Calu3 (cell line): ENCODE measurements at regions of chr18 and their contacts with region 1.

Region 1: DNA sequence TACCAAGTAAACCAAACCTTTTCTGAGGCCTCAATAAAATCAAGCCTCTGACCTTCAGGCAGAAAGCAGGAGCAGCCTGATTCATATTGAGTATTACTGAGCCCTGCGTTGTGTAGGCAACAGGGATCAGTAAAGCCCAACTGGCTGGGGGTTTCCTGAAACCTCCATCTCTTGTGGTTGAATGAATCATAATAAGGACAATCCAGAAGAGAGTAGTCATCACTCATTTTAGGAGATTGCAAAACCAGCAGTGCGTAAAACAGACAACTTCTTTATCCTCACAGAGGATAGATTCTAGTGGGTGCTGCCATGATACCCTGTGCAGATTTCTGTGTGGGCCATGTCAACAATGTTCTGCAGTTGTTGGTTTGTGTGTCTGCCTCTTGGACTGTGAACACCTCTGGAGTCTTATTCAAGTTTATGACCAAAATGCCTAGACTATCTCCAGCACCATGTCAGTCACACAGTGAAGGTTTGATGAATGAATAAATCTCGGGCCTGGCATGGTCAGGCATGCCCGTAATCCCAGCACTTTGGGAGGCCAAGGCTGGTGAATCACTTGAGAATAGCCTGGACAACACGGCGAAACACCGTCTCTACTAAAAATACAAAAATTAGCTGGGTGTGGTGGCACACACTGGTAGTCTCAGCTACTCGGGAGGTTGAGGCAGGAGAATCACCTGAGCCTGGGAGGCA is 51.8 kb upstream of the RAB27B start:
- DNase-seq: peak; percentile 81
- H3K4me3 Mint-ChIP-seq: peak overlapping the region; percentile 1
- H3K27ac Mint-ChIP-seq: peak overlapping the region; percentile 84
- H3K4me1 Mint-ChIP-seq: peaks cover 67% of the 10 kb centered on the region
- H3K27me3 Mint-ChIP-seq: no peaks in the 10 kb centered on the region
- CTCF ChIP-seq: no peak

Region 2: DNA sequence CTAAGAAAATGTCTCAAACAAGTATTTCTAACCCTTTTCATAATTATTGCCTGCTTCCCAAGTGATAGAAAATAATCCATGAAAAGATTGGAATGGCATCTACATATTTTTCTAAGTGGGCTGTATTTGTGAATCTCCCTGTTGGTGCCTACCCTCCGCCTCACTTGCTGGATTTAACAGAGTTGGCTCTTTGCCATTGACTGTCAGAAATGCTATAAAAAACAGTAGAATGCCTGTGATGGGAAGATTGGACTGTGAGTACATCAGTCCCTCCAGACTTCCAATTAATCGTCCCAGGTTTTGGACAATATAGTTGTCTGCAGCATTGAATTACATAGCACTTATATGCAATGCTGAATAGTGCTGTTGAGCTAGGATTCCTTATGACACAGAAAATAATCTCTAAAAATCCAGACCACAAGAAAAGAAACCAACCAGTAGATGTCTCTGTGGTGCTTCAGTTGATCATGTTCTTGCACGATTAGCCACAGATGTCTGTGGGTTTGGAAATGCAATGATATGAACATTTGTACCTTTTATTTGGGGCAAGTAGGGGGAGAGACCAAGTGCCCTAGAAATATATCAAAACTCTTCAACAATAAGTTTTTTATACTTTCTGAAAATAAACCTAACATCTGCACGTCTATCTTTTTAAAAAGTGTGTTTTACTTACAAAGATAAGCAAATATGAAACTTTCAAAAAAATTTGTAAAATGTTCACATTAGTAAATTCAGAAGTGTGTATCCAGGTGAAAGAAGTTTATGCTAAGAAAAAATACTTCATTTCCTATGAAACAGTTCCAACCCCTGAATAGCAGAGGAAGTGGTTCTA is 96.9 kb before region 1 on chr18:
- CTCF ChIA-PET with region 1: interaction called, 11 read pairs
- intact Hi-C with region 1: loop called (anchors 1 kb)
- DNase-seq: peak; percentile 46
- H3K4me3 Mint-ChIP-seq: no peak overlapping the region
- H3K27ac Mint-ChIP-seq: peak overlapping the region; percentile 14
- H3K4me1 Mint-ChIP-seq: peaks cover 31% of the 10 kb centered on the region
- H3K27me3 Mint-ChIP-seq: no peaks in the 10 kb centered on the region
- CTCF ChIP-seq: peak; percentile 25

Region 3: GRCh38 chr18:54684784-54685183 is 91.6 kb before region 1 on chr18:
- CTCF ChIA-PET with region 1: interaction called, 11 read pairs
- intact Hi-C with region 1: loop called (anchors 1 kb)
- DNase-seq: peak; percentile 12
- H3K4me3 Mint-ChIP-seq: no peak overlapping the region
- H3K27ac Mint-ChIP-seq: no peak overlapping the region
- H3K4me1 Mint-ChIP-seq: peaks cover 28% of the 10 kb centered on the region
- H3K27me3 Mint-ChIP-seq: no peaks in the 10 kb centered on the region
- CTCF ChIP-seq: no peak

Region 4: DNA sequence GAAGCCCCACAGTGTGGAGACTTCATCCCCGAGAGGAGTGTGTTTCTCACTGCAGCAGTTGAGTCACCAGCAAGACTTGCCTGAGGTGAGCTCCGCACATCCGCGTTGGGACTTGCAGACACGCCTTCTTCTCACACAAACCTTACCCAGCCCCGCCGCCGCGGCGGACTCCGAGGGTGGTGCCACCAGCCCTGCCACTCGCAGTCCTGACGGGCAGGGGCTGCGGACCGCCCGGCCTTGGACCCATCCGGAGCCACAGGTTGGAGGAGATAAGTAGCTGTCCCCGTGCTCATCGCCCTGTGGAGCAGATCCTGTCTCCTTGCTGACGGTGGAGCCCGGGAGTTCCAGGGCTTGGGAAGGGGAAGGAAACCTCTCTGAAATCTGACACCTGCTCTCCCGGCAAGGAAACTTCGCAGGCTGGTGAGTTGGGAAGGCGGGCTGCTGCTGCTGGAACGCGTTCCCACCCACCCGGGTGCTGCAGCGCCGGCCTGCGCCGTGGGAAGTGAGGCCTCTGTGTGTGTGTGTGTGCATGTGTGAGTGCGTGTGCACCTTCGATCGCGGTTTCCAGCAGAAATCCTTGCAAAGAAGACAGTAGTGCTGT is 52.0 kb after region 1 on chr18 and contains the start of gene RAB27B:
- CTCF ChIA-PET with region 1: interaction called, 4 read pairs
- intact Hi-C with region 1: loop called (anchors 2 kb)
- DNase-seq: peak; percentile 92
- H3K4me3 Mint-ChIP-seq: peak within 1 kb of the TSS; percentile 95
- H3K27ac Mint-ChIP-seq: peak within 1 kb of the TSS; percentile 84
- H3K4me1 Mint-ChIP-seq: peaks cover 67% of the 10 kb centered on the region
- H3K27me3 Mint-ChIP-seq: no peaks in the 10 kb centered on the region
- CTCF ChIP-seq: no peak
- total RNA-seq, gene RAB27B: 38.3 and 60.6 TPM in 2 replicates

Region 5: GRCh38 chr18:54859667-54860421 is 83.4 kb after region 1 on chr18:
- CTCF ChIA-PET with region 1: interaction called, 4 read pairs
- intact Hi-C with region 1: loop called (anchors 2 kb)
- DNase-seq: no peak
- H3K4me3 Mint-ChIP-seq: peak overlapping the region; percentile 64
- H3K27ac Mint-ChIP-seq: peak overlapping the region; percentile 91
- H3K4me1 Mint-ChIP-seq: peaks cover 59% of the 10 kb centered on the region
- H3K27me3 Mint-ChIP-seq: no peaks in the 10 kb centered on the region
- CTCF ChIP-seq: no peak

Region 6: GRCh38 chr18:54983041-54983686 is 206.7 kb after region 1 on chr18:
- CTCF ChIA-PET with region 1: no interaction called
- intact Hi-C with region 1: loop called (anchors 1 kb)
- DNase-seq: peak; percentile 20
- H3K4me3 Mint-ChIP-seq: no peak overlapping the region
- H3K27ac Mint-ChIP-seq: no peak overlapping the region
- H3K4me1 Mint-ChIP-seq: peaks cover 6% of the 10 kb centered on the region
- H3K27me3 Mint-ChIP-seq: no peaks in the 10 kb centered on the region
- CTCF ChIP-seq: peak; percentile 70

Region 7: GRCh38 chr18:55251254-55251971 is 475.0 kb after region 1 on chr18:
- CTCF ChIA-PET with region 1: no interaction called
- intact Hi-C with region 1: no loop called
- DNase-seq: peak; percentile 32
- H3K4me3 Mint-ChIP-seq: peak overlapping the region; percentile 56
- H3K27ac Mint-ChIP-seq: peak overlapping the region; percentile 39
- H3K4me1 Mint-ChIP-seq: peaks cover 34% of the 10 kb centered on the region
- H3K27me3 Mint-ChIP-seq: no peaks in the 10 kb centered on the region
- CTCF ChIP-seq: no peak